Gastrocnemius medialis (tissue), 4 donors: ENCODE measurements at regions of chr12 and their contacts with region 1.

Region 1: GRCh38 chr12:53419761-53420160 is 3.9 kb upstream of the AMHR2 start:
- DNase-seq: no peak
- ATAC-seq: no peak
- H3K4me3 ChIP-seq: no peak overlapping the region
- H3K27ac ChIP-seq: no peak overlapping the region
- H3K4me1 ChIP-seq: peaks cover 0 to 3% of the 10 kb centered on the region in 2 donors
- H3K27me3 ChIP-seq: no peaks in the 10 kb centered on the region
- CTCF ChIP-seq: no peak
- POLR2A ChIP-seq: no peak

Region 2: DNA sequence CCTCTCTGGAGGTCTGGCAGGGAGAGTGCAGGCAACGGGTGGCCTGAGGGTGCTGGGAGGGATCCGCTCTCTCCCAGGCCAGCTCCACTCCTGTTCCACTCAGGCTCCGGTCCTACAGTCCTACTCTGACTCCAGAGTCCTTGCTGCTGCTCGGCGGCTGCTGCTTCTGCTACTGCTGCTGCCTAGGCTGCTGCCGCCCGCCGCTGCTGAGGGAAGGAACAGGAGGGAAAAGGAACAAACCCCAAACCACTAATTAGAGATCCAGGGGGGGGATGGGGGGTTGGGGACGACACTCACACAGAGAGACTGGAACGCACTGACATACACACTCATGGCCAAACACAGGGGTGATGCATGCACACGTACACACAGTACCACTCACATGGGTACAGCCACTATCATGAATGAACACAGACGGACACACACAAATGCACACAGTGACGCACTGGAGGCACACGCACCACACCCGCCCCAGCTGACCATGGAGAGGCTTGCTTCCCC is 83.5 kb before region 1 on chr12 and contains the start of gene SP7:
- in situ Hi-C with region 1: no loop called
- intact Hi-C with region 1: no loop called
- DNase-seq: no peak
- ATAC-seq: no peak
- H3K4me3 ChIP-seq: no peak within 1 kb of the TSS
- H3K27ac ChIP-seq: no peak within 1 kb of the TSS
- H3K4me1 ChIP-seq: no peaks in the 10 kb centered on the region
- H3K27me3 ChIP-seq: peaks cover 14 to 22% (median 15%) of the 10 kb centered on the region in 3 donors
- CTCF ChIP-seq: no peak
- POLR2A ChIP-seq: no peak
- total RNA-seq, gene SP7: not detected

Region 3: DNA sequence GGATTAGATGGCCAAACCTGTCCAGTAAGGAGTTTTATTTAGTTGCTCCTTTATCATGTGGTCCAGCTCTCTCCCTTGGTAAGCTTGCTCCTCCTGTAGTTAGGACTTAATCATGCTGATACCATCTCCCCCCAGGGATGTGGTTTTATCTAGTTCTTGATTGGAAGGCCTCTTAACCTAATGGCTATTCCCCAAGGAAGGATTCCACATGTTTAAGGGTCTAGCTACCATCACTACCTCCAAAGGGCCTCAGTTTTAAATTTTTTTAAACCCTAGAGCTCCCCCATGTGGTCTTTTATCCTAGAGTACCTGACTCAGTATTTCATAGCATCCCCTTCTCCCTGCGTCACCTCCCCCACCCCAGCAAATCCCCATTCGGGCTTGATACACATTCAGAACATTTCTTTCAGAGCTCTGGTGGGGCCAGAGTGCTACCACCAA is 57.0 kb after region 1 on chr12:
- in situ Hi-C with region 1: no loop called
- intact Hi-C with region 1: no loop called
- DNase-seq: no peak
- ATAC-seq: no peak
- H3K4me3 ChIP-seq: no peak overlapping the region
- H3K27ac ChIP-seq: peak overlapping the region; percentile 75 to 86 (median 82)
- H3K4me1 ChIP-seq: peaks cover 65 to 69% of the 10 kb centered on the region in 2 donors
- H3K27me3 ChIP-seq: no peaks in the 10 kb centered on the region
- CTCF ChIP-seq: peak in 4 of 5 experiments; percentile 16 to 33 (median 24)
- POLR2A ChIP-seq: no peak

Region 4: DNA sequence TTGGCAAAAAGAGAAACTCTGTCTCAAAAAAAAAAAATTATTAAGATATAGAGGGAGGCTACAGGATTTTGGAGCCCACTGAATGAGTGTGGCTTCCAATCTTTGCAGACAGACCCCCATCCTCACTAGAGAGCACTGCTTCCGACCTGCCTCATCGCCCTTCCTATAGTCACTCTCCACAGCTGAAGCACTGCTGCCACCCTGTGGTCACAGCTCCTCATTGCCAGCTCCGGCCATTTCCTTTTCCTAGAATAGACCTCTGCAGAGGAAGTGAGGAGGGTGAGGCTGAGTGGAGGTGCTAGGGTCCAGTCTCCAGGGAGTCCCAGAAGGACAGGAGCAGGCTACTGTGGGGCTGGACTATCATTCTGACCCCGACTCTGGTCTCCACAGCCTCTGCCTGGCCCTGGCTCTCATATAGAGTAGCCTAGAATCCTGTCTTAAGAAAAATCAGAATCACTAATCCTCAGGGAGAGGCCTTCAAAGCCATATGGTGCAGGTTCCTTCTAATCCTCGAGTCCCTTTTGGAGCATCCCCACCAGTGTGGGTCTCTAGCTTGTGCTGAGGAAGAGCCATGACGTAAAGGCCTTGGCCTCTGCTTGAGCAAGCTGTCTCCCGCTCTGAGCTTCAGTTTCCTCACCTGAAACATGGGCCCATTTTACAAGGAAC is 88.9 kb after region 1 on chr12:
- in situ Hi-C with region 1: no loop called
- intact Hi-C with region 1: loop called (anchors 2 kb)
- DNase-seq: peak; percentile 65 to 79
- ATAC-seq: peak; percentile 91 to 92
- H3K4me3 ChIP-seq: no peak overlapping the region
- H3K27ac ChIP-seq: peak overlapping the region in 3 of 4 donors; percentile 44 to 55 (median 48)
- H3K4me1 ChIP-seq: peaks cover 0 to 10% of the 10 kb centered on the region in 2 donors
- H3K27me3 ChIP-seq: no peaks in the 10 kb centered on the region
- CTCF ChIP-seq: peak; percentile 84 to 94 (median 90)
- POLR2A ChIP-seq: no peak